CD8-positive, alpha-beta T cell (primary cell): ENCODE measurements at regions of chr12 and their contacts with region 1.

Region 1: DNA sequence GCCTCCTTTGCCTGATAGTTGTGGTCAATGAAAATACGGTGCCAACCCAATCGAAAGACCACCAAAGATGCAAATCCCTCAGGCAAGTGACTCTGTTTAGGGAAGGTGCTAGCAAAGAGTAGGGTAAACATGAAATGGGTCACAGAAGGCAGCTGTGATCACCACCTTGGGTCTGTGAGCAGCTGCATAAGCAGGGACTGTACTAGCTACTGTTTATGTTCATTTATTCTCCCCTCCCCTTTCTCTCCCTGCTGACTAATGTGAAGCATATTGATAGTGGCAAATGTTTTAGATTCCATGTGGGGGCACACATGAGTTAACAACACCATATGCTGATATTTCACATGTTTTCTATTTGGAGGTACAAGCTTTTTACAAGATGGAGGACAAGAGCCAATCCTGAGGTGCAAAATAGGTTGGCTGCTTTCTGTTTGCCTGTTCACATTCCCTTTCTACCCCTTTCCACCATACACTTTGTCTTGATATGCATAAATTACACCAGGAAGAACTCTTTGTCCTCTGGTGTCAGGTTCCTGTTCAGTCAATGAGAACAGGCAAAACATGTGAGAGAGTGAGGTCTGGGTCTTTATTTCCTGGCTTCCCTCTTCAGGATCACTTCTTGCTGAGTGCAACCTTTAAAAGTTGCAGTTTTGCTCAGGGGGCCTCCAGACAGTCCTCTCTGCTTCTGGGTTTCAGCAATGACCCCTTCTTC is 71.1 kb downstream of the AVPR1A start:
- DNase-seq: no peak
- ATAC-seq: no peak
- H3K4me3 ChIP-seq: no peak overlapping the region
- H3K4me3 Mint-ChIP-seq: no peak overlapping the region
- H3K27ac ChIP-seq: no peak overlapping the region
- H3K27ac Mint-ChIP-seq: no peak overlapping the region
- H3K4me1 ChIP-seq: no peaks in the 10 kb centered on the region
- H3K4me1 Mint-ChIP-seq: no peaks in the 10 kb centered on the region
- H3K27me3 ChIP-seq: no peaks in the 10 kb centered on the region
- H3K27me3 Mint-ChIP-seq: no peaks in the 10 kb centered on the region
- CTCF ChIP-seq: no peak

Region 2: DNA sequence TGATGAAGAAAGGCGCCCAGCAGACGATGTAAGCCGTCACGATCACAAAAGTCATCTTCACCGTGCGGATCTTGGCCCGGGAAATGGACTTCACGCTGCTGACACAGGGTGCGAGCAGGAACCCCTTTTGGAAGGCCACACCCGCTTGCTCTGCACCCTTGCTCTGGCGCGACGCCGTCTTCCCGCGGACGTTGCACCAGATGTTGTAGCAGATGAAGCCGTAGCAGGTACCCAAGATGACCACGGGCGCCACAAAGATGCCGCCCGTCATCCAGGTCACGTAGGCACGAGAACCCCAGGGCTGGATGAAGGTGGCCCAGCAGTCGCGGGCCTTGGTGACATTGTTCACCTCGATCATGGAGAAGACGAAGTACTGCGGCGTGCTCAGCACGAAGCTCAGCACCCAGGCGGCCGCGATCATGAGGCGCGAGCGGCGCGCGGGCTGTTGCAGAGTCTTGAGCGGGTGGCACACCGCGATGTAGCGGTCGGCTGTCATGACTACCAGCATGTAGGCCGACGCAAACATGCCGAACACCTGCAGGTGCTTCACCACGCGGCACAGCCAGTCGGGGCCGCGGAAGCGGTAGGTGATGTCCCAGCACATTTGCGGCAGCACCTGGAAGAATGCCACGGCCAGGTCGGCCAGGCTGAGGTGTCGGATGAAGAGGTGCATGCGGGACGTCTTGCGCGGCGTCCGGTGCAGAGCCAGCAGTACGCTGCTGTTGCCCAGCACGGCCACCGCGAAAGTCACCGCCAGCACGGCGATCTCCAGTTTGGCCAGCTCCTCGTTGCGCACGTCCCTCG is 70.2 kb after region 1 on chr12:
- CTCF ChIA-PET with region 1: no interaction called
- POLR2A ChIA-PET with region 1: no interaction called
- intact Hi-C with region 1: loop called in 1 of 2 experiments (anchors 2 kb)
- DNase-seq: no peak
- ATAC-seq: no peak
- H3K4me3 ChIP-seq: no peak overlapping the region
- H3K4me3 Mint-ChIP-seq: no peak overlapping the region
- H3K27ac ChIP-seq: no peak overlapping the region
- H3K27ac Mint-ChIP-seq: no peak overlapping the region
- H3K4me1 ChIP-seq: peaks cover 11% of the 10 kb centered on the region
- H3K4me1 Mint-ChIP-seq: peaks cover 19% of the 10 kb centered on the region
- H3K27me3 ChIP-seq: peaks cover 3 to 9% of the 10 kb centered on the region in 2 experiments
- H3K27me3 Mint-ChIP-seq: peaks cover 50% of the 10 kb centered on the region
- CTCF ChIP-seq: no peak

Region 3: DNA sequence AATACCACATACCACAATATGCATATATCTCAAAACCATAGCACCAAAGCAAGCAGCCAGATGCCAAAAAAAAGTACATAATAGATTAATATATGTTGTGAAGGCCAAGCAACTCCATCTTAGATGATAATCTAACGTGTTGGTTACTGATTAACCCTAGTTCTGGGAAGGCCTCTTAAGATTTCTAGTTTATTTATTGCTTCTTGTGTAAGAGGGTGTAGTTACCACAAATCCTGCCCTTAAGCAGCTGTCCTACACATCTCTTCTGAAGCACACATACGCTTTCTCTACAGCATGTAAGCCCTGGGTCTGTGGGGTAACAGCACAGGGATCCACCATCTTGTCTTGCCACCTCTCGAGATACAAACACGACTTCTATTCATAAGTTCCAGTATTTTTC is 307.8 kb after region 1 on chr12:
- CTCF ChIA-PET with region 1: no interaction called
- POLR2A ChIA-PET with region 1: no interaction called
- intact Hi-C with region 1: no loop called
- DNase-seq: no peak
- ATAC-seq: no peak
- H3K4me3 ChIP-seq: no peak overlapping the region
- H3K4me3 Mint-ChIP-seq: no peak overlapping the region
- H3K27ac ChIP-seq: no peak overlapping the region
- H3K27ac Mint-ChIP-seq: no peak overlapping the region
- H3K4me1 ChIP-seq: no peaks in the 10 kb centered on the region
- H3K4me1 Mint-ChIP-seq: no peaks in the 10 kb centered on the region
- H3K27me3 ChIP-seq: no peaks in the 10 kb centered on the region
- H3K27me3 Mint-ChIP-seq: no peaks in the 10 kb centered on the region
- CTCF ChIP-seq: no peak